ENCODE measurements at regions of chr20 and their contacts with region 1.

Region 1: DNA sequence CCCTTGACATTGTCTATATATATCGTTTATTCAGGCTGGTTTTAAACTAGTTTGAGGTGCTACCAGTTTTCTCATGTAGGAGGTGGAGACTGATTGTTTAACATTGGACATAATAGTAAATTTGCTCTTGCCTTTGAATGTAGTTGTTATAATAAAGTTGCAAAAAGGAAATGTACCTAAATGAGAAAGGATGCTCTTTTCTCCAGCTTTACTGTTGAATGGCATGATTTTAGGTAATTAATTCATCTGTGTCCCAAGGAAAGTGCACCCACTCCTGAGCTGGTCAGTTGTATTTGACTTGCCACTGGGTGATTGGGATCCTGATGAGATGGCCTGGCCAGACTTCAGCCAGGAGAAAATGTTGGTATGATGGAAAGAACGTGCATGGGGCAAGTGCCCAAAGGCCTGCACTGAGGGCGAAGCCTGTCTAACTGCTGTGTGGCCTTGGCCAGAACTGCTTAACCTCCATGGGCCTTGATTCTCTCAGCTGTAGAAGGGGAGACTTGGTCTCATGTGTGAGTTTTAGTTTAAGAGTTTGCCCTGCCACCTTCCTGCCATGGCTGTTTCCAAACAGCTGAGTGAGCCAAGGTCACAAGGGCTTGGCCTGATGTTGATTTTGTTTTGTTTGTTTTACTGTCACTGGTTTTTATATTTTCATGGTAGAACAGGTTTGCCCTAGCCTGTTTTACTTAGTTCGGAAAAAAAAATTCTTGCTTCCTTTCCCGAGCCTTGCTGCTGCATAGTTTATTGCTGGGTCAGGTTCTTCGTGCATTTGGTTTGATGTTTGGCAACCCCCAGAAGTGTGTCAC is 35.2 kb downstream of the DSTN start:
- DNase-seq: no peak
- ATAC-seq: no peak

Region 2: DNA sequence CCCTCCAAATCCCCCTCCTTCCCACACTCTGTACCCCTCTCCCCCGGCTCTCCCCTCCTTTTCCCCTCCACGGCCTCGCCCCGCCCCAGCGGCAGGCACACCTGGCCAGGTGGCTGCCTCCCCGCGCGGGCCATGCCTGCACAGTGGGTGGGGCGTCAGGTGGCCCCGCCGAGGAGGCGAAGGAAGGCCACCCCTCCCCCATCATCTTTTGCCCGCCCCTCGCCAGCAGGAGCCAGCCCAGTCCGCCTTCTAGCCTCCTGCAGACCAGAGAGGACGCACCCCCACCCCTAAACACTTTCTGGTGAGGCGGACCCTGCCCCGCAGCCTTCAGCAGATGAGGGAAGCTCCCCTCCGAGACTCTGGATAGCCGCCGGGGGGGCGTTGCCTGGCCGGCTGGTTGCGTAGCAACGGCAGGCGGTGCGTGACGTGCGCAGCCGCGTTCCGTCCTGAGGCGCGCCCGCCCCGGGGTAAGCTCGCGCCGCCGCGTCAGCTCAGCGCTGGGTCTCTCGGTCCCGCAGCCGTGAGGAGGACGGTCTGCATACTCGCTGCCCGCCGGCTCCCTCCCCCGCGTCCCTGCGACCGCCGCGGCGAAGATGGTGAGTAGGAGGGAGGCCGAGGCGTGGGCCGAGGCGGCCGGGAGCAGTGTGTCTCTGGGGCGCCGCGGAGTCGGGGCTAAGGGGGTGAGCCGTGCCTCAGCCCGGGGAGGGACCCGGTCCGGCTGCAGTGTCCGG is 35.3 kb before region 1 on chr20 and contains the start of gene DSTN:
- intact Hi-C with region 1: loop called (anchors 5 kb)
- DNase-seq: peak; percentile 96
- ATAC-seq: peak; percentile 93
- total RNA-seq, gene DSTN: 865 TPM

Measured in Right ventricle myocardium inferior (tissue), 1 donor.